ENCODE measurements at regions of chr5 and their contacts with region 1.

Region 1: GRCh38 chr5:33969572-33970452 is 14.7 kb downstream of the SLC45A2 start:
- DNase-seq: no peak
- ATAC-seq: peak in 7 of 8 donors; percentile 74 to 85 (median 78)
- H3K4me3 ChIP-seq: no peak overlapping the region
- H3K27ac ChIP-seq: no peak overlapping the region
- H3K4me1 ChIP-seq: peaks cover 0 to 14% (median 0%) of the 10 kb centered on the region in 9 donors
- H3K27me3 ChIP-seq: no peaks in the 10 kb centered on the region
- CTCF ChIP-seq: peak; percentile 29 to 74 (median 67)

Region 2: GRCh38 chr5:33433303-33434240 is 536.2 kb before region 1 on chr5:
- intact Hi-C with region 1: loop called in 7 of 10 experiments (anchors 2 to 10 kb)
- DNase-seq: no peak
- ATAC-seq: no peak
- H3K4me3 ChIP-seq: no peak overlapping the region
- H3K27ac ChIP-seq: no peak overlapping the region
- H3K4me1 ChIP-seq: peaks cover 0 to 7% (median 0%) of the 10 kb centered on the region in 9 donors
- H3K27me3 ChIP-seq: peaks cover 0 to 1% (median 0%) of the 10 kb centered on the region in 7 donors
- CTCF ChIP-seq: no peak

Region 3: GRCh38 chr5:33440482-33441240 is 529.2 kb before region 1 on chr5 and contains the start of gene TARS1:
- intact Hi-C with region 1: loop called in 6 of 10 experiments (anchors 2 to 10 kb)
- DNase-seq: peak; percentile 95 to 100
- ATAC-seq: peak; percentile 97 to 100 (median 98)
- H3K4me3 ChIP-seq: peak within 1 kb of the TSS; percentile 55 to 88 (median 75)
- H3K27ac ChIP-seq: peak within 1 kb of the TSS; percentile 78 to 95 (median 93)
- H3K4me1 ChIP-seq: peaks cover 0 to 52% (median 50%) of the 10 kb centered on the region in 9 donors
- H3K27me3 ChIP-seq: no peaks in the 10 kb centered on the region
- CTCF ChIP-seq: no peak
- total RNA-seq, gene TARS1: 61.9 to 97.8 (median 74.5) TPM

Region 4: GRCh38 chr5:33470544-33470943 is 499.3 kb before region 1 on chr5:
- intact Hi-C with region 1: loop called in 4 of 10 experiments (anchors 10 kb)
- DNase-seq: no peak
- ATAC-seq: peak in 6 of 8 donors; percentile 37 to 62 (median 46)
- H3K4me3 ChIP-seq: no peak overlapping the region
- H3K27ac ChIP-seq: no peak overlapping the region
- H3K4me1 ChIP-seq: peaks cover 0 to 7% (median 0%) of the 10 kb centered on the region in 9 donors
- H3K27me3 ChIP-seq: no peaks in the 10 kb centered on the region
- CTCF ChIP-seq: peak in 6 of 9 donors; percentile 33 to 62 (median 48)

Region 5: GRCh38 chr5:33850100-33850594 is 119.7 kb before region 1 on chr5:
- intact Hi-C with region 1: no loop called
- DNase-seq: no peak
- ATAC-seq: peak in 1 of 8 donors; percentile 27
- H3K4me3 ChIP-seq: no peak overlapping the region
- H3K27ac ChIP-seq: no peak overlapping the region
- H3K4me1 ChIP-seq: peaks cover 0 to 37% (median 19%) of the 10 kb centered on the region in 9 donors
- H3K27me3 ChIP-seq: no peaks in the 10 kb centered on the region
- CTCF ChIP-seq: no peak